ENCODE measurements at regions of chr21 and their contacts with region 1.

Region 1: DNA sequence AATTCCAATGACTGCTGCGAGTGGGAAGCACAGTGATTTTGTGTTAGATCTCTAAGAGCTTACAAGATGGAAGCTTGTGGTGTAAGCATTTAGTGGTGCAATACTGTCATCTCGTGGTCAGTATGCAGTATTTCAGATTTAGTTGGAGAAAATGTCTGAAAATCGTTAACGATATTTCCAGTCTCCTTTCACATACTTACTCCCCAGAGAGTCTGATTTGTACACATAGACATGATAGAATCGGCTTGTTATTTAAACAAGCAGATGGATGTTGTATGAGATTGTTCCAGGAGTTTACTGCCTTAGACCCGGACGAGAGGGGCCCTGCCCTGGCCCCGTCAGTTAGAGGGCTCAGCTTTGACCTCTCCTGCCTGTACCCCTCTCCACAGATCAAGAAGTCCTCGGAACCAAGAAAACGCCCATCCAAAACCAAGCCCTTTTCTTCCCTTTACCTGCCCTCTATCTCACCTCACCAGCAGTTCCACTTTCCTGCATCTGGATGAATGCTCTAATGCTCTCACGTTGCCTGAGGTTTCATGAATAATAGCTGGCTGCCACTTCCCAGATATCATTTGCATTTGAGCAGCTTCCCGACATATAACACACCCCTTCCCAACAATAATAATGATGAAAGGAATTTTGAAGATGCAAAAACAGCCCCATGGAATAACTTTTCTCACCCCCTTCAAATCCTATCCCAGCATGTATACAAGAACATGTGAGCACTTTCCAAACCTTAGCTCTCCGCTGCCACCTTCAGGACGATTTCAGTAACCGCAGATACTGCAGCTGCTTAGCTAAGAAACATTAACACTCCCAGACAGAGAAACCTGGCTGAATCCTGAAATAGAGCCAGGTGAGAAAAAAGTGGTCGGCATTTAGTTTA is 247.3 kb downstream of the LTN1 start:
- DNase-seq: peak; percentile 87
- H3K4me3 Mint-ChIP-seq: no peak overlapping the region
- H3K27ac Mint-ChIP-seq: no peak overlapping the region
- H3K4me1 Mint-ChIP-seq: no peaks in the 10 kb centered on the region
- H3K27me3 Mint-ChIP-seq: peaks cover 4% of the 10 kb centered on the region

Region 2: DNA sequence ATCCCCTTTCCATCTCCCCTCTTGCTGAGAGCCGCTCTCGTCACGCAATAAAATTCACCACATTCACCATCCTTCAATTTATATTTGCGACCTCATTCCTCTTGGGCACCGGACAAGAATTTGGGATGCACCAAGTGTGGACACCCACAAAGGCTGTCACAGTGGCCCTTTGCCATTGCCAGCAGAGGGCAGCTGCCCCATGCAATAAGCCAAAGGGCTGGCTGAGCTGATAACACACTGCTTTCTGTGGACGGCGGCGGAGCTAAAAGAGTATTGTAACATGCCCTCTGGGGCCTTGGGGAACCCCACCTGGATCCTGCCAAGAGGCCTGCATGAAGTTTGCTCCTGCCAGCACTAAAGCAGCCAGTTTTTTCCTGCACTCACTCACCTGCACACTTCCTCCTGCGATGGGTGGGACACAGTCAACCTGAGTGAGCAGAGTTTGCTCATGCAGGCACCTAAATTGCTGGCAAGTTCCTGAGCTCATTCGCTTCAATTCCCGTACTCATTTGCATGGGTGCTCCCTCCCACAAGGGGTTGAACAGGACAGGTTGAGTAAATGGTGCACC is 986.2 kb before region 1 on chr21:
- CTCF ChIA-PET with region 1: no interaction called
- intact Hi-C with region 1: loop called (anchors 1 kb)
- DNase-seq: no peak
- H3K4me3 Mint-ChIP-seq: no peak overlapping the region
- H3K27ac Mint-ChIP-seq: no peak overlapping the region
- H3K4me1 Mint-ChIP-seq: no peaks in the 10 kb centered on the region
- H3K27me3 Mint-ChIP-seq: peaks cover 2% of the 10 kb centered on the region

Region 3: GRCh38 chr21:28516991-28517592 is 228.3 kb before region 1 on chr21:
- CTCF ChIA-PET with region 1: interaction called, 137 read pairs
- intact Hi-C with region 1: loop called (anchors 1 kb)
- DNase-seq: peak; percentile 79
- H3K4me3 Mint-ChIP-seq: no peak overlapping the region
- H3K27ac Mint-ChIP-seq: no peak overlapping the region
- H3K4me1 Mint-ChIP-seq: no peaks in the 10 kb centered on the region
- H3K27me3 Mint-ChIP-seq: no peaks in the 10 kb centered on the region

Region 4: GRCh38 chr21:28714777-28715464 is 30.5 kb before region 1 on chr21:
- CTCF ChIA-PET with region 1: interaction called, 11 read pairs
- intact Hi-C with region 1: no loop called
- DNase-seq: no peak
- H3K4me3 Mint-ChIP-seq: no peak overlapping the region
- H3K27ac Mint-ChIP-seq: no peak overlapping the region
- H3K4me1 Mint-ChIP-seq: no peaks in the 10 kb centered on the region
- H3K27me3 Mint-ChIP-seq: no peaks in the 10 kb centered on the region

Region 5: GRCh38 chr21:28781602-28782276 is 36.4 kb after region 1 on chr21:
- CTCF ChIA-PET with region 1: interaction called, 17 read pairs
- intact Hi-C with region 1: no loop called
- DNase-seq: peak; percentile 18
- H3K4me3 Mint-ChIP-seq: no peak overlapping the region
- H3K27ac Mint-ChIP-seq: no peak overlapping the region
- H3K4me1 Mint-ChIP-seq: peaks cover 1% of the 10 kb centered on the region
- H3K27me3 Mint-ChIP-seq: no peaks in the 10 kb centered on the region

Region 6: DNA sequence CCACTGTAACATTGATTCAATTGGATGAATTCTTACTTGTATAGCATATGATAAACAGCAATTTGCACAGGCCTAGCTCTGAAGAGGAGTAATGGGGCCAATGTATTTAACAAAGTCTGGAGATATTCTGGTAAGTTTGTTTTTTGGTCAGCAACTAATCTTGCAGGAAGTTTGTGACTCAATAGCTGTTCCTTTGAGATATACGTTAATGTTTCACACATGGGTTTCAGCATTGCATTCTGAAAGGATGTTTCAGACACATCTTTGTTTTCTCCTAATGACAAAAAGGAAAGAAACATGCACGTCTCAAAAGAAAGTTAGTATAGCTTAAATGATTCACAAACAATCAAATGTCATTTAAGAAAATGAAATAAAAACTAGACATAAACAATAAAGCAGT is 198.3 kb after region 1 on chr21:
- CTCF ChIA-PET with region 1: interaction called, 16 read pairs
- intact Hi-C with region 1: loop called (anchors 1 kb)
- DNase-seq: no peak
- H3K4me3 Mint-ChIP-seq: no peak overlapping the region
- H3K27ac Mint-ChIP-seq: no peak overlapping the region
- H3K4me1 Mint-ChIP-seq: no peaks in the 10 kb centered on the region
- H3K27me3 Mint-ChIP-seq: no peaks in the 10 kb centered on the region

Region 7: GRCh38 chr21:28971171-28971570 is 225.8 kb after region 1 on chr21:
- CTCF ChIA-PET with region 1: no interaction called
- intact Hi-C with region 1: no loop called
- DNase-seq: no peak
- H3K4me3 Mint-ChIP-seq: no peak overlapping the region
- H3K27ac Mint-ChIP-seq: no peak overlapping the region
- H3K4me1 Mint-ChIP-seq: peaks cover 6% of the 10 kb centered on the region
- H3K27me3 Mint-ChIP-seq: no peaks in the 10 kb centered on the region

Measured in activated naive CD4-positive, alpha-beta T cell treated with anti-CD3 and anti-CD28 coated beads for 36 hours (primary cell).